ENCODE measurements at regions of chr3 and their contacts with region 1.

Region 1: DNA sequence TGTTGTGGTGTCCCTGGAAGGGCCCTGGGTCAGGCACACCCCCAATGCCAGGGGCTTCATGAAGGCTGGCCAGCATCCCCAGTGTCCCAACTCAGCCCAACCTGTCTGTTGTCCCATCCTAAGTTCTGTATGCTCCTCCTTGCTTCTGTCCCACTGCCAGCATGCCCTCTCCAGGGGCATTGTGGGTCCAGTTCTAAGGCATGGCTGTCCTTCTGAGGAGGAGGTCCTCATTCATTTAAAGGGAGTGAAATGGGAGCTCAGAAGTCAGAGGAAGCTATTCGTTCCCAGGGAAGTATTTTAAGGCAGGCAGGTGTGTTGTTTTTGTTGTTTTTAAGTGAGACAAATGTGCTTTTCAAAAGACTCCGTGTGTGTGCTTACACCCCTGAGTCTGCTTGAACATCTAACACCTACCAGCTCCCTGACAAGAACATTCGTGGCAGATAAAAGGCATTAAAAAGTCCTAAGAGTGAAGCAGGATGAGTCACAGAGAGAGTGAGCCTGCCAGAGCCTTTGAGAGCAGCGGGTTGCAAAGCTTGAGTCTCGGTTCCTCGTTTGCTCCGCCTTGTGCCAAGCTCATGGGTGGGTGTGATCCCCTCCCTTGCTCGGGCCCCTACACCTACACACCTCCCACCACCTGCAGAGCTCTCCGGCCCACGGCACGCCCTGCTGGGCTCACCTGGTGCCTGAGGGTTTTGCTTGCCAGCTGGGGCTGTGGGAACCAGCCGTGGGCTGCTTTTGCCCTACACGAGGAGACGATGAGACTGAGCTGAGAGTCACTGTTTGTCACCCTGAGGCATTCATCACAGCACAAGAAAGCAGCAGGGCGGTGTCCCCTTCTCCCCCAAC is 183.4 kb upstream of the TOPAZ1 start:
- DNase-seq: peak; percentile 87
- ATAC-seq: peak; percentile 97
- H3K4me3 ChIP-seq: no peak overlapping the region
- H3K27ac ChIP-seq: peak overlapping the region; percentile 86
- H3K4me1 ChIP-seq: peaks cover 50% of the 10 kb centered on the region
- H3K27me3 ChIP-seq: no peaks in the 10 kb centered on the region
- CTCF ChIP-seq: no peak
- EP300 ChIP-seq: peak; percentile 44 to 66; a peak in 2 of 4 replicates
- POLR2A ChIP-seq: peak; percentile 64
- RAD21 ChIP-seq: no peak

Region 2: DNA sequence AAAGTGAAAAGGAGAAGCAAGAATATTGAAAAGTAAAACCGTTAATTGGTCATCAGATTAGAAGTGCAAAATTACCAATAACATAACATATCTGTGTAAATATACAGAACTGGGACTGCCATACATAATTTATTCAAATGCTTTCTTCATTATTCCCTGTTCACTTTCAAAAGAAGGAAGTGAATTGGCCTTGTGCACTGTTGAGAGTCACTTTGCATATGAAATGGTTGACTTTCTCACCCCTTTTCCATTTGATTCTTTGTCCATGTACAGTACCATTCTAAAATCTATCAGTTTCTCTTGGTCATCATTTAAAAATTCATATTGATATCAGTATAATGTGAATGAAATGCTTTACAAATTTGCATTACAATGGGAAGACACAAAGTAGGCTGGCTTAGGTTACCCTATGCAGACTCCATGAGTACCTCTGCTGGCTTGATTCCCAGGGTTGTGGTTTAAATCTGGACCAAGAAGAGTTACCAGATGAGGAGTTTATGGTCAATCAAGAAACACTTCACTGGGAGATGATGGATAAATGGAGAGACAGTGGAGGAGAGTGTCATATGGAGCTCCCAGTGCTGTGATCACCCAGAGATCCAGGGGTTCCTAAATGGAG is 27.4 kb before region 1 on chr3:
- CTCF ChIA-PET with region 1: interaction called, 3 read pairs
- POLR2A ChIA-PET with region 1: interaction called, 8 read pairs
- RAD21 ChIA-PET with region 1: interaction called, 31 read pairs
- SMC1A ChIA-PET with region 1: interaction called, 30 read pairs
- in situ Hi-C with region 1: no loop called
- intact Hi-C with region 1: no loop called
- DNase-seq: no peak
- ATAC-seq: no peak
- H3K4me3 ChIP-seq: peak overlapping the region; percentile 45; the same call in 1 of the 2 replicates
- H3K27ac ChIP-seq: peak overlapping the region; percentile 90
- H3K4me1 ChIP-seq: peaks cover 34% of the 10 kb centered on the region
- H3K27me3 ChIP-seq: no peaks in the 10 kb centered on the region
- CTCF ChIP-seq: no peak
- EP300 ChIP-seq: no peak
- POLR2A ChIP-seq: no peak
- RAD21 ChIP-seq: no peak

Region 3: GRCh38 chr3:44036850-44037249 is 21.4 kb before region 1 on chr3:
- CTCF ChIA-PET with region 1: interaction called, 46 read pairs
- POLR2A ChIA-PET with region 1: interaction called, 8 read pairs
- RAD21 ChIA-PET with region 1: interaction called, 99 read pairs
- SMC1A ChIA-PET with region 1: interaction called, 92 read pairs
- in situ Hi-C with region 1: no loop called
- intact Hi-C with region 1: no loop called
- DNase-seq: no peak
- ATAC-seq: peak; percentile 66
- H3K4me3 ChIP-seq: no peak overlapping the region
- H3K27ac ChIP-seq: no peak overlapping the region
- H3K4me1 ChIP-seq: peaks cover 23% of the 10 kb centered on the region
- H3K27me3 ChIP-seq: no peaks in the 10 kb centered on the region
- CTCF ChIP-seq: no peak
- EP300 ChIP-seq: no peak
- POLR2A ChIP-seq: no peak
- RAD21 ChIP-seq: no peak

Region 4: GRCh38 chr3:44045476-44046275 is 12.6 kb before region 1 on chr3:
- CTCF ChIA-PET with region 1: interaction called, 46 read pairs
- POLR2A ChIA-PET with region 1: interaction called, 51 read pairs
- RAD21 ChIA-PET with region 1: interaction called, 99 read pairs
- SMC1A ChIA-PET with region 1: interaction called, 92 read pairs
- in situ Hi-C with region 1: no loop called
- intact Hi-C with region 1: loop called (anchors 1 kb)
- DNase-seq: peak; percentile 98
- ATAC-seq: peak; percentile 93
- H3K4me3 ChIP-seq: no peak overlapping the region
- H3K27ac ChIP-seq: peak overlapping the region; percentile 93
- H3K4me1 ChIP-seq: peaks cover 72% of the 10 kb centered on the region
- H3K27me3 ChIP-seq: no peaks in the 10 kb centered on the region
- CTCF ChIP-seq: no peak
- EP300 ChIP-seq: peak; percentile 81 to 90; a peak in 3 of 4 replicates
- POLR2A ChIP-seq: no peak
- RAD21 ChIP-seq: no peak

Region 5: GRCh38 chr3:44104668-44105321 is 46.5 kb after region 1 on chr3:
- CTCF ChIA-PET with region 1: interaction called, 3 read pairs
- POLR2A ChIA-PET with region 1: interaction called, 4 read pairs
- RAD21 ChIA-PET with region 1: interaction called, 11 read pairs
- SMC1A ChIA-PET with region 1: interaction called, 10 read pairs
- in situ Hi-C with region 1: no loop called
- intact Hi-C with region 1: no loop called
- DNase-seq: peak; percentile 81
- ATAC-seq: peak; percentile 99
- H3K4me3 ChIP-seq: no peak overlapping the region
- H3K27ac ChIP-seq: peak overlapping the region; percentile 58; the same call in 1 of the 2 replicates
- H3K4me1 ChIP-seq: peaks cover 20% of the 10 kb centered on the region
- H3K27me3 ChIP-seq: no peaks in the 10 kb centered on the region; a peak in 1 of 4 replicates
- CTCF ChIP-seq: no peak
- EP300 ChIP-seq: peak in 1 of 2 experiments; percentile 49; a peak in 1 of 4 replicates
- POLR2A ChIP-seq: no peak
- RAD21 ChIP-seq: no peak

Region 6: GRCh38 chr3:44114142-44114541 is 55.9 kb after region 1 on chr3:
- CTCF ChIA-PET with region 1: interaction called, 6 read pairs
- POLR2A ChIA-PET with region 1: no interaction called
- RAD21 ChIA-PET with region 1: interaction called, 5 read pairs
- SMC1A ChIA-PET with region 1: interaction called, 10 read pairs
- in situ Hi-C with region 1: no loop called
- intact Hi-C with region 1: no loop called
- DNase-seq: no peak
- ATAC-seq: peak; percentile 96
- H3K4me3 ChIP-seq: no peak overlapping the region
- H3K27ac ChIP-seq: no peak overlapping the region
- H3K4me1 ChIP-seq: no peaks in the 10 kb centered on the region
- H3K27me3 ChIP-seq: no peaks in the 10 kb centered on the region
- CTCF ChIP-seq: peak; percentile 59 to 68 (median 59)
- EP300 ChIP-seq: no peak
- POLR2A ChIP-seq: no peak
- RAD21 ChIP-seq: peak; percentile 63